ENCODE measurements at regions of chr12 and their contacts with region 1.

Region 1: DNA sequence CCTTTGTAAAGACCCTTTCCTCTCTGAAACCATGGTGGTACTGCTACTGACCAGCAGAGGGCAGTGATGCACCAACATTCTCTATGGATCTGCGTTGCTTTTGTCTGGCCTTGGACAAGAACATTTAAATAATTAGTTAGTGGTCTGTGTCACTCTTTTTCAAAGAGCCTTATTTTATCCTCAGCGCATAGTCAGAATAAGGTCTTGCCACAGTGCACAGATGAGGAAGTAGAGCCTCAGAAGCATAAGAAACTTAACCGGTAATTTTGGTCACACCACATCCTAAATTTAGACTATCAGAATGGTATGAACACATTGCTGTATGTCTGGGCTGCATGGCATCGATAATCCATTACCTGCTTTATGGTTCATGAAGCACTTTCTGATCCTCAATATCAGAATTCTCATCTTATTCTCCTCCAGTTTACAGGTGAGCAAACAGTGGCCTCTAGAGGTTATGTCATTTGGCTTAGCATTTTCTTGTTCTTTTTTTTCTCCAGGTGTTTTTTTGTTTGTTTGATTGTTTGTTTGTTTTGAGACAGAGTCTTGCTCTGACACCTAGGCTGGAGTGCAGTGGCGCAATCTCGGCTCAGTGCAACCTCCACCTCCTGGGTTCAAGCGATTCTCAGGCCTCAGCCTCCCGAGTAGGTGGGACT is 23.7 kb upstream of the IFT81 start:
- DNase-seq: peak in 1 of 2 donors; percentile 64
- ATAC-seq: peak; percentile 90
- H3K4me3 ChIP-seq: no peak overlapping the region
- H3K27ac ChIP-seq: no peak overlapping the region
- H3K4me1 ChIP-seq: no peaks in the 10 kb centered on the region
- H3K27me3 ChIP-seq: no peaks in the 10 kb centered on the region

Region 2: DNA sequence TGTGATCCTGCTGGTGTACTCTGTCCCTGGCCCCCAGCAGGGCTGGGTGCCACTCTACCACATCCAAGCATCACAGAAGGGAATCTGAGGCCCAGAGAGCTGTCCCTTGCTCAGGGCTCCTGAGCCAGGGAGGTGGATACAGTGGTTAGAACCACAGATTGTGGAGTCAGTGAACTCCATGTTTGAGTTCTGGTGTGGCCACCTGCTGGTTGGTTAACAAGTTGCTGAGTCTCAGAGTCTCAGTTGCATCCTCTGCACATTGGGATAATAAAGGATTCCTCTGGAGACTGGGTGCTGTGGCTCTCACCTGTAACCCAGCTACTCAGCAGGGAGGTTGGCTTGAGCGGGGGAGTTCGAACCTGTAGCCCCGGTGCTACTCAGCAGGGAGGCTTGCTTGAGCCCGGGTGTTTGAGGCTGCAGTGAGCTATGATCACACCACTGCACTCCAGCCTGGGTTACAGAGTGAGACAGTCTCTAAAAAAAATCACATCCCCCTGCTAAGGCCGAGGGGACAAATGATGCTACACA is 487.4 kb before region 1 on chr12:
- intact Hi-C with region 1: no loop called
- DNase-seq: no peak
- ATAC-seq: no peak
- H3K4me3 ChIP-seq: no peak overlapping the region
- H3K27ac ChIP-seq: no peak overlapping the region
- H3K4me1 ChIP-seq: no peaks in the 10 kb centered on the region
- H3K27me3 ChIP-seq: no peaks in the 10 kb centered on the region

Region 3: GRCh38 chr12:110134691-110135411 is 34.4 kb after region 1 on chr12:
- intact Hi-C with region 1: loop called in 1 of 2 experiments (anchors 5 kb)
- DNase-seq: no peak
- ATAC-seq: no peak
- H3K4me3 ChIP-seq: no peak overlapping the region
- H3K27ac ChIP-seq: peak overlapping the region in 1 of 2 donors; percentile 90
- H3K4me1 ChIP-seq: peaks cover 0 to 3% of the 10 kb centered on the region in 2 donors
- H3K27me3 ChIP-seq: no peaks in the 10 kb centered on the region

Region 4: GRCh38 chr12:110431957-110432587 is 331.6 kb after region 1 on chr12:
- intact Hi-C with region 1: loop called (anchors 2 to 5 kb)
- DNase-seq: no peak
- ATAC-seq: no peak
- H3K4me3 ChIP-seq: no peak overlapping the region
- H3K27ac ChIP-seq: no peak overlapping the region
- H3K4me1 ChIP-seq: no peaks in the 10 kb centered on the region
- H3K27me3 ChIP-seq: no peaks in the 10 kb centered on the region

Region 5: DNA sequence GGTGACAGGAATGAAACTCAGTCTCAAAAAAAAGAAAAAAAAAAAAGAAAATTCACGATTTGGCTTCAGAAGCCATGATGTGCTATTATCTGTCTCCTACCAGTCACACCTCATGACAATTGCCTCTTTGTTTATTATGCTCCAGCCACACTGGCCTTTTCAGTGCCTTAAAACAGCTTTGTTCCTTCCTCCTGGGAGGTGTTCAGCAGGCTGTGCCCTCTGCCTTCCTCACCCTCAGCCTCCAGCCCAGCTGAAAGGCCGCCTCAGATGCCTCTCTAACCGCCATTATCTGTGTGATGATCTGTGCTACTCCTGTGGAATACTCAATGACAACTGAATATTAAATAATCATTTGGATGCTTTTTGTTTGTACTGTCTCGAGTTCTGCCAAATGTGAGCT is 358.3 kb after region 1 on chr12:
- intact Hi-C with region 1: no loop called
- DNase-seq: no peak
- ATAC-seq: no peak
- H3K4me3 ChIP-seq: no peak overlapping the region
- H3K27ac ChIP-seq: no peak overlapping the region
- H3K4me1 ChIP-seq: no peaks in the 10 kb centered on the region
- H3K27me3 ChIP-seq: no peaks in the 10 kb centered on the region

Measured in aorta (tissue), 5 donors.